Dorsolateral prefrontal cortex (tissue), 120 donors: ENCODE measurements at regions of chr9 and their contacts with region 1.

Region 1: DNA sequence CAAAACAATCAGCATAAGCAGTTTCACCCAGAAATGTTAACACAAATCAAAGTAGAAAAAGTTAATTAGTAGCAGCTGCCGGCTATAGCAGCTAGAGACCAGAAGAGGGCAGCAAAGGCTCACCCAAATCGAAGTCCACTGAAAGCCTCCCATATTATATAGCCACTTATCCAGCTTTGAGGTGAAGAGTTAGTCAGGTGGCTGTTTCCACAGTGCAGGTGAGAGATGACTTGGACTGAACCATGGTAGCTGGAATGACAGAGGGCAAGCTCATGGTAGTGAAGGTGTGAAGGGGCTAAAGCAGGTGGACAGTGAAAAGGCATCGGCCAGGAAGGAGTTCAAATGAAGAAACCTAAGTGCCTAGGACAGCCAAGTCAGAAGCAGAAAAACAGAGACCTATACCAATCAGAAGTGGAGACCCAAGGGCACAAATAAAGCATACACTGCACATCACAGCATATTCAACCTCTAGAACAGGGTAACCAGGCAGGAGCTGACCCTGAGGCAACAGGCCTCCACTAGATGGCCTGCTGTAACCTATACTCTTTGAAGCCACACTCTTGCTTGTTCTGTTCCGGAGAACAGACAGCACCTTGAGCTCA is 7.2 kb upstream of the RNF38 start:
- DNase-seq: peak in 9 of 10 donors; percentile 20 to 69 (median 50)
- H3K4me3 ChIP-seq: no peak overlapping the region
- H3K27ac ChIP-seq: peak overlapping the region in 46 of 59 donors; percentile 2 to 79 (median 47)
- H3K27me3 ChIP-seq: no peaks in the 10 kb centered on the region
- CTCF ChIP-seq: peak; percentile 71 to 97 (median 89)

Region 2: DNA sequence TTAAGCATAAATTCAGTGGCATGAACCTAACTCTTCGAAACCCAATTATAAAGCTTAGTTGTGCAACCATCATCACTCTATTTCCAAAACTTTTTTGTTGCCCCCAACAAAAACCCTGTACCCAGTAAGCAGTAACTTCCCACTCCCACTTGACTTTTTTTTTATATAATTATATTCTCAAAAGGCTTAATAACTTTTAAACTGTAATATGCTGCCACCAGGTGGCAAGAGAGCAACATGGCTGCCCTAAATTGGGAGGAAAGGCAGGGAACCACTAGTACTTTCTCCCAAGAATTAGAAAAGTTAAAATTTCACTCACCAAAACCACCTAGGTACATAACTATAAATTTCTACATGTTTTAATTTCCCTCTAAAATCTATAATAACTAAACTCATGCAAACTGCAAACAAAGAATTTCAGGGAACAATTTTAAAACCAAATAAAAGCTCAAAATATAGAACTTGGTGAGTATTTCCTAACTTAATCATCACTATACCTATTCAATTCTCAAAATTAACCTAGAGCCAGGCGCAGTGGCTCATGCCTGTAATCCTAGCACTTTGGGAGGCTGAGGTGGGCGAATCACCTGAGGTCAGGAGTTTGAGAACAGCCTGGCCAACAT is 43.0 kb after region 1 on chr9:
- intact Hi-C with region 1: loop called (anchors 1 kb)
- DNase-seq: peak in 1 of 10 donors; percentile 37
- H3K4me3 ChIP-seq: no peak overlapping the region
- H3K27ac ChIP-seq: no peak overlapping the region
- H3K27me3 ChIP-seq: no peaks in the 10 kb centered on the region
- CTCF ChIP-seq: peak; percentile 65 to 96 (median 82)

Region 3: DNA sequence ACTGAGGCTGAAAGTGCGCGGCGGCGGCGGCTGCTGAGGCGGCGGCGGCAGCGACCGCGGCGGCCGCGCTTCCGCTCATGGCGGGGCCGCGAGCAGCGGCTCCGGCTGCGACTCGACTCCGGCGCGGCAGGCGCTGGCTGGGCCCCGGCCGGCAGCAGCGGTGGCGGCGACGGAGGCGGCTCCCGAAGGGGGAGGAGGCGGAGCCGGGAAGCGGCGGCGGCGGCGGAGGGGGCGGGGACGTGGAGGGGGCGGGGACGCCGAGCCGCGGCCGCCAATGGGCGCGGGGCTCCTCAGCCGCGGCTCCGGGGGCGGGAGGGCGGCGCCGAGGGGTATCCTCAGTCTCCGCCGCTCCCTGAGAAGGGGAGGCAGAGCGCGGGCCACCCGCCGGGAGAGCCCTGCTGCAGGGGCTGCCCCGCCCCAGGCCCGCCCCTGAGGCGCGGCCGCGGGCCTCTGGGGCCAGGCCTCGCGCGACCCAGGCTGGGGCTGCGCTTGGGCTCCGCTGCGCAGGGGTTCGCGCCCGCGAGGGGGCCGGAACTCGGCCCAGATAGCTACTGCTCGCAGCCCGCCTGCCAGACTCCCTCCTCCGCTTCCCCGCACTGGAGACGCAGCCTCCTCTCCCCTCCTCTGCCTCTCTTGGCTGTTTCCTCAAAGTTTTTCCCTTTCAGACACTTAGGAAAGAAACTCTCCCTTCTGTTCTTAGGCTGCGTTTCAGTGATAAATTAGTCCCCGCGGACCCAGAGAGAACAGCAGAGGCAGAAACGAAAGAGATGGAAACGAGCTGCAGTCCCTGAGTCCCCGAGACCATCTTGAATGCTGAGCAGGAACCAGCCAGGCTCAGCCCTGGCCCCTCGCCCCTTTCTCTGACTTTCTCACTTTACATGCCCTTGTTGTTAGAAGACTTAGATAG is 80.5 kb after region 1 on chr9:
- intact Hi-C with region 1: loop called in 1 of 2 experiments (anchors 2 kb)
- DNase-seq: peak; percentile 66 to 93 (median 84)
- H3K4me3 ChIP-seq: peak overlapping the region; percentile 59 to 98 (median 86)
- H3K27ac ChIP-seq: peak overlapping the region; percentile 19 to 96 (median 91)
- H3K27me3 ChIP-seq: no peaks in the 10 kb centered on the region
- CTCF ChIP-seq: peak in 24 of 56 donors; percentile 9 to 51 (median 27)

Region 4: GRCh38 chr9:36551129-36551528 is 143.9 kb after region 1 on chr9:
- intact Hi-C with region 1: loop called (anchors 1 to 5 kb)
- DNase-seq: no peak
- H3K4me3 ChIP-seq: no peak overlapping the region
- H3K27ac ChIP-seq: no peak overlapping the region
- H3K27me3 ChIP-seq: no peaks in the 10 kb centered on the region
- CTCF ChIP-seq: no peak

Region 5: GRCh38 chr9:36560857-36561221 is 153.6 kb after region 1 on chr9:
- intact Hi-C with region 1: loop called in 1 of 2 experiments (anchors 5 kb)
- DNase-seq: no peak
- H3K4me3 ChIP-seq: no peak overlapping the region
- H3K27ac ChIP-seq: no peak overlapping the region
- H3K27me3 ChIP-seq: no peaks in the 10 kb centered on the region
- CTCF ChIP-seq: no peak

Region 6: DNA sequence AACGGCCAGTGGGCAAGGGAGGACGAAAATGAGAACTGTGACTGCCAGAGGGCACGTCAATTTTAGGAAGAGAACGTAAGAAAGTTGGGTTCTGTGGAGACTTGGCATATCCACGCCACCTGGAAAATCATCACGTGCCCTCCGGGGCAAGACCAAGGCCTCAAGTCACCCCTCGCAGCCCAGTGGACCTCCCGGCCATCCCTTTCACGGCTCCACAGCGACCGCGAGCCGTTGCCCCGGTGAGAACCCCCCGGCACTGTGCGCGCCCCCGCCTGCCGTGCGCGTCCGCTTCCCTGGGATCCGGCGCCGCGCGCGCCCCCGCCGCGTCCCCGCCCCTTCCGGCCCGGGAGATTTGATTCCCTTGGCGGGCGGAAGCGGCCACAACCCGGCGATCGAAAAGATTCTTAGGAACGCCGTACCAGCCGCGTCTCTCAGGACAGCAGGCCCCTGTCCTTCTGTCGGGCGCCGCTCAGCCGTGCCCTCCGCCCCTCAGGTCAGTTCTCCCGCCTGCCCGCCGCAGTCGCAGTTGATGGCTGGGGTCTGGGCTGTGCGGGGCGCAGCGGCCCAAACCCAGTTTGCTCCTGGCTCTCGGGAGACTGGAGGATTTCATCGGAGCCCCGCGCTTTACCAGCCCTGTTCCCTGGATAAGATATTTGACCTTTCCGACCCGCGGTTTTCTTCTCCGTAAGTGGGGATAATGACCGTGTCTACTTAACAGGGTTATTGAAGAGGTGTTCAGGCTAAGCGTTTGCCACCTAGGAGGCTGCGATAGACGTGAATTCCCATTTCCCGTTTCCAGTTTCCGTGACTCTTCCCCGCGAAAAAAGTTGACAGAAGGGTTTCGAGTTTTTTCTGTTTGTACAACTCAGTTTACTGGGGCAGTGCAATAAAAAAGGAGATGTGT is 165.5 kb after region 1 on chr9 and contains the start of gene MELK:
- intact Hi-C with region 1: loop called in 1 of 2 experiments (anchors 5 kb)
- DNase-seq: peak; percentile 52 to 87 (median 66)
- H3K4me3 ChIP-seq: peak within 1 kb of the TSS; percentile 59 to 100 (median 84)
- H3K27ac ChIP-seq: peak within 1 kb of the TSS in 41 of 59 donors; percentile 24 to 84 (median 62)
- H3K27me3 ChIP-seq: no peaks in the 10 kb centered on the region
- CTCF ChIP-seq: peak in 13 of 56 donors; percentile 11 to 36 (median 20)
- total RNA-seq, gene MELK: 0.22 to 1.8 (median 0.47) TPM in 31 of 120 experiments, not detected in the others

Region 7: DNA sequence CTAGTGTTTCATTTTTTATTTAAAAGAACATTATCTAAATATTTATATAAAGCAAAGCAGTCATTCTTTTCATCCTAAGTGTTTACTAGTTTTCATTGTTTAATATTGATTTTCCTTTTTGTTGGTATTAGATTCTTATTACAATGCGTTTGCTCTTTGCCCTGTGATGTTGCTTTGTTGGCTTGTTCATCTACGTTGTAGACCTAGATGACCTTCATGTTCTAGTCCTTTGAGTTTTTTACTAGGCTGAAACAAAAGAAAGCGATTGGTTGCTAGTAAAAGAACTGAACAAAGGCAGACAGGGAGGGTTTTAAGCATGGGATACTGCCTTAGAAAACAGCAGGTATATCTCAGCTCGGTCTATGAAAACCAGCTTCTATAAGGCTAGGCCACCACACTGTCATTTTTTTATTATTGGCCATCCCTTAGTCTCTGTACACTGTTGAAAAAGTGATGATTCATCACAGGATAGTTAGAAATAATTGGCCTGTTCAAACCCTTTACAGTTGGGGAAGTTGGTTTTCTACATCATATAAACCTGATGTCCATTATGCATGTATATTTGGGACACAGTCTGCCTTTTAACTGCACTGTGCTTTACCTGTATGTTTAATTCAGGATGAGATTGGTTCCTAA is 832.1 kb after region 1 on chr9:
- intact Hi-C with region 1: no loop called
- DNase-seq: no peak
- H3K4me3 ChIP-seq: no peak overlapping the region
- H3K27ac ChIP-seq: no peak overlapping the region
- H3K27me3 ChIP-seq: no peaks in the 10 kb centered on the region
- CTCF ChIP-seq: no peak

Region 8: DNA sequence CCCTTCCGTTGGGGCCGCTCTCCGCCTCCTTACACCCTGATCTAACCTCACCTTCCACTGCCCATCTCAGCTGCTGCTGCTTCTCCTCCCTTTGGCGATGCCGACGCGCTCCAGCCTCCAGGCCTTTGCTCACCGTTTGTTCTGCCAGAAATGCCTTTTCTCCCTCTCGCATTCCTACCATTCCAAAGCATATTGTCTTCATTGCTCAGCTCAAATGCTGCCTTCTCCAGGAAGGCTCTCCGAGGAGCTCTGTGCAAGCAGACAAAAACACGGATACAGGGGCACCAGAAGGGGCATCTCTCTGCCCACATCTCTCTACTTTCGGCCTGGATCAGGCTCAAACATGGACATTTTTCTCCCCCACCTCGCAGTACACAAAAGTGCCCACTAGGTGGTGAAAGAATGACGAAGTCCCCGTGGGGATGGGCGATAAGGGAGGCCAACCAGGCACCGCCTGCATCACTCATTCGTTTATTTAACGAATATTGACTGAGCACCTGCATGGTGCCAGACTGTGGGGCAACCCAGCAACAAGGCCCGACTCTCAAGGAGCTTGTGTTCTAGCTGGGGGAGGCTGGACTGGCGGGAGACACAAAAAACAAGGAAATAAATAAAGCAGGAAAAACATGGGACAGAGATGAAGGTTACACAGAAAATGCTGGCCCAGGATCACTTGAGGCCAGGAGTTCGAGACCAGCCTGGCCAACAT is 1007.9 kb after region 1 on chr9:
- intact Hi-C with region 1: loop called in 1 of 2 experiments (anchors 5 kb)
- DNase-seq: peak in 9 of 10 donors; percentile 45 to 80 (median 74)
- H3K4me3 ChIP-seq: peak overlapping the region in 15 of 59 donors; percentile 0 to 38 (median 19)
- H3K27ac ChIP-seq: peak overlapping the region in 57 of 59 donors; percentile 8 to 89 (median 75)
- H3K27me3 ChIP-seq: no peaks in the 10 kb centered on the region
- CTCF ChIP-seq: peak; percentile 71 to 97 (median 90)